Endothelial cell of umbilical vein (primary cell): ENCODE measurements at regions of chr3 and their contacts with region 1.

Region 1: GRCh38 chr3:52154117-52155094 is at the start of gene POC1A:
- DNase-seq: peak; percentile 97
- H3K4me3 ChIP-seq: peak within 1 kb of the TSS; percentile 64 to 69 (median 65)
- H3K27ac ChIP-seq: peak within 1 kb of the TSS; percentile 58
- H3K4me1 ChIP-seq: peaks cover 14% of the 10 kb centered on the region
- H3K27me3 ChIP-seq: no peaks in the 10 kb centered on the region
- CTCF ChIP-seq: no peak
- POLR2A ChIP-seq: peak; percentile 64
- total RNA-seq, gene POC1A: 16.7 and 19.4 TPM in 2 replicates

Region 2: GRCh38 chr3:52197842-52198668 is 43.6 kb after region 1 on chr3 and contains the start of gene ALAS1:
- CTCF ChIA-PET with region 1: interaction called, 4 read pairs
- POLR2A ChIA-PET with region 1: interaction called, 3 read pairs
- dilution Hi-C with region 1: no loop called
- intact Hi-C with region 1: loop called (anchors 2 kb)
- DNase-seq: peak; percentile 93
- H3K4me3 ChIP-seq: peak within 1 kb of the TSS; percentile 89 to 93 (median 91)
- H3K27ac ChIP-seq: peak within 1 kb of the TSS; percentile 62
- H3K4me1 ChIP-seq: peaks cover 17% of the 10 kb centered on the region
- H3K27me3 ChIP-seq: no peaks in the 10 kb centered on the region
- CTCF ChIP-seq: peak in 1 of 2 donors; percentile 26
- POLR2A ChIP-seq: peak; percentile 97
- total RNA-seq, gene ALAS1: 45.1 and 48.1 TPM in 2 replicates

Region 3: GRCh38 chr3:52278510-52279069 is 124.2 kb after region 1 on chr3 and contains the start of gene WDR82:
- CTCF ChIA-PET with region 1: no interaction called
- POLR2A ChIA-PET with region 1: interaction called, 3 read pairs
- dilution Hi-C with region 1: no loop called
- intact Hi-C with region 1: loop called (anchors 5 kb)
- DNase-seq: peak; percentile 94
- H3K4me3 ChIP-seq: peak within 1 kb of the TSS; percentile 53 to 96 (median 87)
- H3K27ac ChIP-seq: peak within 1 kb of the TSS; percentile 62
- H3K4me1 ChIP-seq: peaks cover 34% of the 10 kb centered on the region
- H3K27me3 ChIP-seq: no peaks in the 10 kb centered on the region
- CTCF ChIP-seq: peak; percentile 35 to 57
- POLR2A ChIP-seq: peak; percentile 95
- total RNA-seq, gene WDR82: 71.3 and 71.8 TPM in 2 replicates

Region 4: GRCh38 chr3:52596658-52597265 is 442.4 kb after region 1 on chr3:
- CTCF ChIA-PET with region 1: no interaction called
- POLR2A ChIA-PET with region 1: no interaction called
- dilution Hi-C with region 1: no loop called
- intact Hi-C with region 1: no loop called
- DNase-seq: no peak
- H3K4me3 ChIP-seq: no peak overlapping the region
- H3K27ac ChIP-seq: no peak overlapping the region
- H3K4me1 ChIP-seq: no peaks in the 10 kb centered on the region
- H3K27me3 ChIP-seq: no peaks in the 10 kb centered on the region
- CTCF ChIP-seq: no peak
- POLR2A ChIP-seq: no peak